Ovary (tissue), 10 donors: ENCODE measurements at regions of chr15 and their contacts with region 1.

Region 1: DNA sequence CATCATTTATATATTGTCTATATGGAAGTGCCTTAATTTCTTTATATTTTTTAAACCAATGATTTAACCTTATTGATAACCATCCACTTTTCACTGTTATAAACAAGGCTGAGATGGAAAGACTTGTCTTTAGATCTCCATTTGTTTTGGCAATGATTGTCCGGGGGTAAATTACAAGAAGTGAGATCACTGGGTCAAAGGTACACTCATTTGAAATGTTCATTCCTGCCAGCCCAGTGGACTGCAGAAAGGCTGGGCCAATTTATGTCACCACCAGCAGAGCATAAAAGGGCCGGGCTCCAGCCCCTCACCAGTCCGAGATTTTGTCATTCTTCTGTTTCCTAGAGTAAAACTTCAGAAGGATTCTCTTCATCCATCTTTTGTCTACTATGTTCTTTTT is 93.6 kb upstream of the NEO1 start:
- DNase-seq: no peak
- H3K4me3 ChIP-seq: no peak overlapping the region
- H3K27ac ChIP-seq: no peak overlapping the region
- H3K4me1 ChIP-seq: no peaks in the 10 kb centered on the region
- H3K27me3 ChIP-seq: no peaks in the 10 kb centered on the region
- CTCF ChIP-seq: no peak
- EP300 ChIP-seq: no peak
- POLR2A ChIP-seq: no peak

Region 2: GRCh38 chr15:73021139-73021621 is 62.5 kb after region 1 on chr15:
- intact Hi-C with region 1: loop called in 1 of 4 experiments (anchors 10 kb)
- DNase-seq: no peak
- H3K4me3 ChIP-seq: no peak overlapping the region
- H3K27ac ChIP-seq: no peak overlapping the region
- H3K4me1 ChIP-seq: no peaks in the 10 kb centered on the region
- H3K27me3 ChIP-seq: no peaks in the 10 kb centered on the region
- CTCF ChIP-seq: no peak
- EP300 ChIP-seq: no peak
- POLR2A ChIP-seq: no peak